ENCODE measurements at regions of chr9 and their contacts with region 1.

Region 1: DNA sequence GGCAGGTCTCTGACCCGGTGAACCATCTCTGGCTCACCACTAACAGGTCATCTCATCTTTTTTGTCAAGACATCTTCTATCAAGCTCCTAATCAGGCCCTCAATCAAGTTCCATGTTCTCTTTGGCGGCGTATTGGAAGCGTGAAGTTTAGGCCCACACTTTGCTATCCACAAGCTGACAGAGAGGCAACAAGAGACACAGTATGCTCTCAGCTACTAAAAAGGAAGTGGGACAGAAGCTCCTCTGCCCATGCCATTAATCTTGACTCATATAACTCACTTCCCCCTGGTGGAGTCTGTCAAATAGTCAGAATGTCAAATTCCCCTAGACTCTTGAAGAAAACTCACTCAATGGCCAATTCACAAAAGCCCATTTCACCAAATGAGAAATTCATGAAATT is 77.6 kb upstream of the TMC1 start:
- DNase-seq: peak; percentile 85
- ATAC-seq: peak; percentile 97
- H3K4me3 ChIP-seq: no peak overlapping the region
- H3K27ac ChIP-seq: peak overlapping the region; percentile 79; the same call in 1 of the 2 replicates
- H3K4me1 ChIP-seq: peaks cover 15% of the 10 kb centered on the region
- H3K27me3 ChIP-seq: no peaks in the 10 kb centered on the region
- CTCF ChIP-seq: peak in 1 of 3 experiments; percentile 21; a peak in 2 of 6 replicates
- EP300 ChIP-seq: peak; percentile 61 to 88
- POLR2A ChIP-seq: no peak
- RAD21 ChIP-seq: peak; percentile 49

Region 2: DNA sequence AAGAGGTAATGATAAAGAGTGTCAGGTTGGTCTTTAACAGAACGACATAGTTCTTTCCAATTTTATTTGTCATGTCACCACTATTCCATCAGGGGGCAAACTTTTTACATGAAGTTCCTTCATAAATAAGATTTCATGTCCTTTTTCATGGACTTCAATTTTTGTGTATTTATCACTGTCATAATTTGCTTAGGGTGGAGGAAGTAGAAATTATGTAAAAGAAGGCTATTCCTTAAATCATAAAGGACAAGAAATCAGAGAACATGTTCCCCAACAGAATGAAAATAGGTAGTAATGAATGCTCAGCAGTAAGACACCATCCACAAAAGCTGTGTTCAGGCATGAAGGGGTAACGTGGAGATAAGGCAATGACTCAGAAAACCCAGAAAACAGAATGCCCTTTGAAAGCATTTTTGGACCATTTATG is 151.6 kb before region 1 on chr9:
- CTCF ChIA-PET with region 1: interaction called, 3 read pairs
- POLR2A ChIA-PET with region 1: no interaction called
- RAD21 ChIA-PET with region 1: interaction called, 3 read pairs
- SMC1A ChIA-PET with region 1: interaction called, 4 read pairs
- in situ Hi-C with region 1: no loop called
- intact Hi-C with region 1: loop called (anchors 2 kb)
- DNase-seq: no peak
- ATAC-seq: peak; percentile 61
- H3K4me3 ChIP-seq: no peak overlapping the region
- H3K27ac ChIP-seq: no peak overlapping the region
- H3K4me1 ChIP-seq: no peaks in the 10 kb centered on the region
- H3K27me3 ChIP-seq: no peaks in the 10 kb centered on the region
- CTCF ChIP-seq: peak; percentile 27 to 63 (median 33); a peak in 4 of 6 replicates
- EP300 ChIP-seq: no peak
- POLR2A ChIP-seq: no peak
- RAD21 ChIP-seq: peak; percentile 65

Region 3: DNA sequence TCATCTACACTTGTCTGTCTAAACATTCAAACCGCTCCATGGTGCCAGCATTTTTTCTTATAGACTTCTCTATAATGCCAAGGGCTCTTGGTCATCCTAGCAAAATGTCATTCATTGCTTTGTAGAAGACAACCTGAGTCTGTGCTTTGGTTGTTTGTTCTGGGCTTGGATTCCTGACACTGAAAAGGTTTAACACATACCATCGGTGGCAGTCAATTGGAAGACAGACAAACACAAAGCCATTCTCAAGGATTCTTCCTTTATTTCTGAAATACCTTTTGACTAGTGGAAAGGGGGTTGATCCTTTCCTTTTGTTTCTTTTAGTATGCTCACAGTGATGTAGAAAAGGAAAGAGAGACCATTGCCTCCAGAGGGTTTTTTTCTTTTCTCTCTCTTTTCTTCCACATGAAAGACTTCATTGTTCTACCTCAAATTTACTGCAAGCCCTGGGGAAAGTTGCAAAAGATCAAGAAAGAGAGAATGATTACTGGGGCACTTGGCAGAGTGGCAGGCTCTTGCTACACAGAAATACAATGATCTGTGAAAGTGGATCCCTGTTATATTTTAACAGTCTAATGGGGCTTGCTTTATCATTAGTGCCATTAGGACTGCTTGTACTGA is 11.1 kb after region 1 on chr9:
- CTCF ChIA-PET with region 1: interaction called, 46 read pairs
- POLR2A ChIA-PET with region 1: interaction called, 8 read pairs
- RAD21 ChIA-PET with region 1: interaction called, 43 read pairs
- SMC1A ChIA-PET with region 1: interaction called, 73 read pairs
- in situ Hi-C with region 1: no loop called
- intact Hi-C with region 1: no loop called
- DNase-seq: no peak
- ATAC-seq: no peak; the same call in 2 of the 3 replicates
- H3K4me3 ChIP-seq: no peak overlapping the region
- H3K27ac ChIP-seq: no peak overlapping the region
- H3K4me1 ChIP-seq: no peaks in the 10 kb centered on the region
- H3K27me3 ChIP-seq: no peaks in the 10 kb centered on the region
- CTCF ChIP-seq: no peak
- EP300 ChIP-seq: no peak
- POLR2A ChIP-seq: no peak
- RAD21 ChIP-seq: no peak

Region 4: DNA sequence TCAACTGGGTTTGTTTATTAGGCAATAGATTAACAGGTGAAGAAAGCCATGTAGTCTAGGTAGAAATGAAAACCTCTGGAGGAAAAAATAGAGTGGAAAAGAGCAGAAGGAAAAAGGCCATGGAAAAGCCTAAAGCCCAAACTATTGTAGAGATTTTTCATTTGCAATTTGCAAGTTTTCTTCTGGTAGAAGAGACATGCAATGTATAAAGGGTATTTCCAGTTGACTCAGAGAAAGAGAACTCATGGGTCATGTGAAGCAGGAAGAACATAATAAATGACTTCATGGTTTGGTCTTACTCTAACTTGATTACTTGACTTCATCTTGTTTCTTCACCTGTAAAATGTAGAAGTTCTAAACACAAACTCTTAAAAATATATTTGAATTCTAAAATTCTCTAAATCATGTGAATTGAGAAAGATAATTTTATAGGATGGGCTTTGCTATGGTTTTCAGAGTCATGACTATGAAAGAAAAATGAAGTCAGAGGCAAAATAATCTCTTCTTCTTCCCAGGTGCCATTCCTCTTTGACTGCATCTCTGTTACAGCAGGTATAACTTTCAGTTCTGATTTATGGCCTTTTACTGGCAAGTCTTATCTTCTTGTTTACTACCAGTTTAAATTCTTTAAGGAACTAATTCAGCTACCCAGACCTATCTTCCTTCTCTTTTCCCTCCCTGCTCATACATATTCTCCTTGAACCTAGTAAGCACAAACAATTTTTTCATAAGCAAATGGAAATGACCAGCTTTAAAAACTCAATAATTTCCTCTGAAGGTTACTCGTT is 29.8 kb after region 1 on chr9:
- CTCF ChIA-PET with region 1: interaction called, 10 read pairs
- POLR2A ChIA-PET with region 1: interaction called, 3 read pairs
- RAD21 ChIA-PET with region 1: interaction called, 10 read pairs
- SMC1A ChIA-PET with region 1: interaction called, 15 read pairs
- in situ Hi-C with region 1: no loop called
- intact Hi-C with region 1: loop called (anchors 2 kb)
- DNase-seq: peak; percentile 48
- ATAC-seq: peak; percentile 94
- H3K4me3 ChIP-seq: no peak overlapping the region
- H3K27ac ChIP-seq: peak overlapping the region; percentile 94
- H3K4me1 ChIP-seq: peaks cover 4% of the 10 kb centered on the region
- H3K27me3 ChIP-seq: no peaks in the 10 kb centered on the region
- CTCF ChIP-seq: no peak
- EP300 ChIP-seq: peak in 1 of 2 experiments; percentile 70; a peak in 2 of 4 replicates
- POLR2A ChIP-seq: no peak
- RAD21 ChIP-seq: no peak

Region 5: DNA sequence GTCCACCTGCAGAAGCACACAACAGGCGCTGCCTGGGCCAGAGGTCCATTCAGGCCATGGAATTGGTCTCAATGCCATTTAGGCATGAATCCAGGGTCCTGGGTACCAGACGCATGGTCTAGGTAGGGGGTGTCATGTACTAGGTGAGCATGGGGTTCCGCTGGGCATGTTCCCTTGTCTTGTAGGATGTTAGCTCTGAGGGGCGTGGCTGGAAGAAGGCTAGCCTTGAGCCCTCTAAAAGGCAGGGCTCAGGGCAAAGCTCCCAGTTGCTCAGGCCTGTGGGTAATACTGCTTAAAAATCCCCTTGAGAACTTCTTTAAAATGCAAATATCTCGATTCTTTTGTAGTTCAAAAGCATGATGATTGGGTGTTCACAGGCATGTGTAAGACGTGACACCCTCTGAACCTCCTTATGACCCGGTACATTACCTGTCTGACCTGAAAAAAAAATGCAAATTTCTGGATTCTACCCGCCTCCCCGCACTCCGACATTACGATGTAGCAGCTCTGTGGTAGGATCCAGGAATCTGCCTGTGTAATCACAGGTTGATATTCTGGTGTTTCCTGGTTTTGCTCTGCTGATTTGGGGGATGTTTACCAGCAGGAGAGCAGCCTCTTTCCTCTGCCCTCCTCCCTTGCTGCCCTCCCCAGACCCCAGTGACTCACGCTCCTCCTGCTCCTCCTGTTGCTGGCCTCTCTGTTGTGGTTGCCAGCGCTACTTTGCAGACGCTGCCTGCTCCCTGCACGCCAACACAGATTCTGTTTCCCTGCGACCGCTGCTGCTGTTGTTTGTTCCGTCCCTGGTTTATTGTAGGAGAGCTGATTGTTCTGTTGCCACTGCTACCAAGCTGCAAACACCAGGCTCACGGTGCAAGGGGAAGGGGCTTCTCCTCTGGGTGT is 83.3 kb after region 1 on chr9:
- CTCF ChIA-PET with region 1: interaction called, 3 read pairs
- POLR2A ChIA-PET with region 1: interaction called, 13 read pairs
- RAD21 ChIA-PET with region 1: interaction called, 31 read pairs
- SMC1A ChIA-PET with region 1: interaction called, 20 read pairs
- in situ Hi-C with region 1: no loop called
- intact Hi-C with region 1: loop called (anchors 1 kb)
- DNase-seq: peak; percentile 77
- ATAC-seq: peak; percentile 90
- H3K4me3 ChIP-seq: peak overlapping the region; percentile 51
- H3K27ac ChIP-seq: peak overlapping the region; percentile 66
- H3K4me1 ChIP-seq: peaks cover 16% of the 10 kb centered on the region
- H3K27me3 ChIP-seq: no peaks in the 10 kb centered on the region
- CTCF ChIP-seq: peak in 1 of 3 experiments; percentile 22; a peak in 1 of 6 replicates
- EP300 ChIP-seq: peak; percentile 3 to 63; a peak in 1 of 4 replicates
- POLR2A ChIP-seq: peak; percentile 76
- RAD21 ChIP-seq: no peak

Measured in GM12878 (cell line).